CD14-positive monocyte (primary cell): ENCODE measurements at regions of chr18 and their contacts with region 1.

Region 1: DNA sequence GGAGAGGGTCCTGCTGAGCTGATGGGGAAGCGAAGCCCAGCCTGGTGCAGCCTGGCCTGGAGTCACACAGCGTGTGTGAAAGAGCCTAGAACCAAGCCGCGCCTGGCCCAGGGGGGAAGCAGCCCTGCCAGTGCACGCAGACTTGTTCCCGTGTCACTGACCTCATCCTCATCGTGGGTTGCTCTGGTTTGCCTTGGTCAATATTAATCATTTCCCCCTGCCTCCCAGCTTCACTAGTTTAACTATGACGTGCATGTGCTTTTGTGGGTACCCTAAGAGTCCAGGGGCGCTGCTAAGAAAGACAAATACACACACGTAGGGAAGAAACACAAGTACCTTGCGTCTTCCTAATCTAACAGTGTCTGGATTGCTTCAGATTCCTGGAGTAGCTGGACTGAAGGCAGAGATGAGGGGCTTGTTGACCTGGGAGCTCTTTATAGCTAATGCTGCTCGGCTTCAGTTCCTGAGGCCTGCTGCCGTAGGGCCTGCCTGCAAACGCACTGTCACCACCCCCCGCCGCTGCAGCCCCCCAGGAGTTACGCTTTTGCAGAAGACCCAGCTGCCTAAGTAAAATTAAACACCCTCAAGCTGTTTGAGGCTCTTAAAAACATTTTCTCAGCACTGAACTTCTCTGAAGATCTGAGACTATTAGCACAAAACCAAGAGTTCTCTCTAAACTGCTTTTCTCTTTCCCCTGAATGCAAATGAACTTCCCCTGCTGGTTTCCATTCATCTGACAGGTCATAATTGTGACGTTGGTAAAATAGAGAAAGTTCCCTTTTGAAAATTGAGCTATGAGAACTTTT is 159.2 kb downstream of the FAM210A start:
- DNase-seq: peak; percentile 94 to 97 (median 96)
- H3K4me3 ChIP-seq: peak overlapping the region in 2 of 3 experiments; percentile 20 to 47
- H3K4me3 Mint-ChIP-seq: peak overlapping the region; percentile 59 to 78
- H3K27ac ChIP-seq: peak overlapping the region; percentile 99 to 100
- H3K27ac Mint-ChIP-seq: peak overlapping the region; percentile 99 to 100 (median 99)
- H3K4me1 ChIP-seq: peaks cover 72 to 80% of the 10 kb centered on the region in 2 donors
- H3K4me1 Mint-ChIP-seq: peaks cover 75% of the 10 kb centered on the region
- H3K27me3 ChIP-seq: no peaks in the 10 kb centered on the region
- H3K27me3 Mint-ChIP-seq: peaks cover 0 to 1% (median 0%) of the 10 kb centered on the region in 3 donors
- CTCF ChIP-seq: no peak

Region 2: GRCh38 chr18:13375302-13376255 is 191.6 kb before region 1 on chr18:
- intact Hi-C with region 1: loop called in 1 of 2 experiments (anchors 10 kb)
- DNase-seq: peak; percentile 74 to 89 (median 80)
- H3K4me3 ChIP-seq: no peak overlapping the region
- H3K4me3 Mint-ChIP-seq: no peak overlapping the region
- H3K27ac ChIP-seq: no peak overlapping the region
- H3K27ac Mint-ChIP-seq: peak overlapping the region; percentile 50 to 87 (median 72)
- H3K4me1 ChIP-seq: peaks cover 11 to 26% of the 10 kb centered on the region in 2 donors
- H3K4me1 Mint-ChIP-seq: peaks cover 31% of the 10 kb centered on the region
- H3K27me3 ChIP-seq: no peaks in the 10 kb centered on the region
- H3K27me3 Mint-ChIP-seq: peaks cover 2 to 4% (median 3%) of the 10 kb centered on the region in 3 donors
- CTCF ChIP-seq: no peak

Region 3: DNA sequence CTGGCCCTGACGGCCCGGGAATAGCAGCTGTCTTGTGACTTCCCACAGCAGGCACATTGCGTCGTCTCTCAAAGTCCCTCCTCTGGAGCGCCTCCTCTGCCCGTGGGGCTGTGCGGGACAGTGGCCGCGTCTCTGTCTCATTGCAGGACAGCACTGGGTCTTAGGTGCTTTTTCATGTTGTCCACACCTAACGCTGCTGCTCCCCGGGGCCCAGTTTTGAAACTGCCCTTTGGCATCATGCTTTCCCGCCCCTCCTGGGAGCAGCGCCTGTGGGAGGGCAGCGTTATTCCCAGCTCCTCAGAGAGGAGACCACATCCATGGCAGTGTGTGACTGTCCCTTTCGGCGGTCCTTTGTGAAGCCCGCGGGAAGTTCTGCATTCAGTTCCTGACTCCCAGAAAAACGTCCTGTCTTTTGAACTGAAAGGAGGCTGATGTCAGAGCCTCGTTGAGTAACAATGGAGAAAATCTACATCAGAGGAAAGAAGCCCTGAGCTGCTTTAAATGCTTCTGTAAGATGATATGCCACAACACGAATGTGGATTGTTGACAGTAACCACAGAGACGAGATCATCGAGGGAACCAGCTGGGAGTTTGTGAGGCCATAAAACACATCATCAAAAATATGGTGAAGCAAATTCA is 66.8 kb before region 1 on chr18:
- intact Hi-C with region 1: no loop called
- DNase-seq: no peak
- H3K4me3 ChIP-seq: no peak overlapping the region
- H3K4me3 Mint-ChIP-seq: no peak overlapping the region
- H3K27ac ChIP-seq: no peak overlapping the region
- H3K27ac Mint-ChIP-seq: no peak overlapping the region
- H3K4me1 ChIP-seq: no peaks in the 10 kb centered on the region
- H3K4me1 Mint-ChIP-seq: peaks cover 2% of the 10 kb centered on the region
- H3K27me3 ChIP-seq: no peaks in the 10 kb centered on the region
- H3K27me3 Mint-ChIP-seq: peaks cover 0 to 8% (median under 1%) of the 10 kb centered on the region in 3 donors
- CTCF ChIP-seq: no peak

Region 4: GRCh38 chr18:13548966-13549879 is 17.9 kb before region 1 on chr18:
- intact Hi-C with region 1: no loop called
- DNase-seq: peak in 1 of 3 donors; percentile 25
- H3K4me3 ChIP-seq: peak overlapping the region in 1 of 3 experiments; percentile 39
- H3K4me3 Mint-ChIP-seq: peak overlapping the region; percentile 60 to 83
- H3K27ac ChIP-seq: peak overlapping the region; percentile 40 to 57
- H3K27ac Mint-ChIP-seq: peak overlapping the region; percentile 78 to 95 (median 91)
- H3K4me1 ChIP-seq: peaks cover 20% of the 10 kb centered on the region in 2 donors
- H3K4me1 Mint-ChIP-seq: peaks cover 28% of the 10 kb centered on the region
- H3K27me3 ChIP-seq: no peaks in the 10 kb centered on the region
- H3K27me3 Mint-ChIP-seq: peaks cover 2 to 8% (median 3%) of the 10 kb centered on the region in 3 donors
- CTCF ChIP-seq: no peak

Region 5: DNA sequence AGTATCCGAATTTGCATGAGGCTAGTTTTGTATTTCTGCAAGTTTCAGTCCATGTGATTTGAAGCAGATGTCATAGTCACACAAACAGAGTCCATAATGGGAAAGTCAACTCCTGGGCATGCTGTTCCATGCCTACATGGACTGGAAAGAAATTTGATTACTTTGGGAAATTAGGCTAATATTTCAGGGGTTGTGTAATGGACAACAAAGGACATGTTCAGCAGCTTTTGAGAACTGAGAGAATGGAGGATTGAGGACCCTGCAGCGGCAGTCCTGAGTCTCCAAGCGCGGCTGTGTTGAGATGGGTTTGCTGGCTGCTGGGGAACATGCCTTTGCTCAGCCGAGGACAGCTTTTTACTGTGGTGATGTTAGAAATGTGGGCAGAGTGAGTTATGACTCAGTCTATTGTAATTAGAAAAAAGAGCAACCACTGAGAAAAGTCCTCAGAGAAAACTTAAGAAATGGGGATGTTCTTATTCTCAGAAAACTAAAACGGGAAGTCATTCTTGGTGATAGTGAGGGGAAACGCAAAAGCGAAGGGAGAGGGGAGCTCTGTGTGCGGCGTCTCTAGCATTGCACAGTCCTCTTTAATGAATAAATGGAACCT is 10.1 kb after region 1 on chr18:
- intact Hi-C with region 1: loop called in 1 of 2 experiments (anchors 1 kb)
- DNase-seq: peak; percentile 82 to 92 (median 88)
- H3K4me3 ChIP-seq: peak overlapping the region; percentile 20 to 58 (median 24)
- H3K4me3 Mint-ChIP-seq: peak overlapping the region; percentile 53 to 75
- H3K27ac ChIP-seq: peak overlapping the region; percentile 89 to 92
- H3K27ac Mint-ChIP-seq: peak overlapping the region; percentile 95 to 98 (median 98)
- H3K4me1 ChIP-seq: peaks cover 48% of the 10 kb centered on the region in 2 donors
- H3K4me1 Mint-ChIP-seq: peaks cover 46% of the 10 kb centered on the region
- H3K27me3 ChIP-seq: no peaks in the 10 kb centered on the region
- H3K27me3 Mint-ChIP-seq: peaks cover 2% of the 10 kb centered on the region in 3 donors
- CTCF ChIP-seq: no peak

Region 6: DNA sequence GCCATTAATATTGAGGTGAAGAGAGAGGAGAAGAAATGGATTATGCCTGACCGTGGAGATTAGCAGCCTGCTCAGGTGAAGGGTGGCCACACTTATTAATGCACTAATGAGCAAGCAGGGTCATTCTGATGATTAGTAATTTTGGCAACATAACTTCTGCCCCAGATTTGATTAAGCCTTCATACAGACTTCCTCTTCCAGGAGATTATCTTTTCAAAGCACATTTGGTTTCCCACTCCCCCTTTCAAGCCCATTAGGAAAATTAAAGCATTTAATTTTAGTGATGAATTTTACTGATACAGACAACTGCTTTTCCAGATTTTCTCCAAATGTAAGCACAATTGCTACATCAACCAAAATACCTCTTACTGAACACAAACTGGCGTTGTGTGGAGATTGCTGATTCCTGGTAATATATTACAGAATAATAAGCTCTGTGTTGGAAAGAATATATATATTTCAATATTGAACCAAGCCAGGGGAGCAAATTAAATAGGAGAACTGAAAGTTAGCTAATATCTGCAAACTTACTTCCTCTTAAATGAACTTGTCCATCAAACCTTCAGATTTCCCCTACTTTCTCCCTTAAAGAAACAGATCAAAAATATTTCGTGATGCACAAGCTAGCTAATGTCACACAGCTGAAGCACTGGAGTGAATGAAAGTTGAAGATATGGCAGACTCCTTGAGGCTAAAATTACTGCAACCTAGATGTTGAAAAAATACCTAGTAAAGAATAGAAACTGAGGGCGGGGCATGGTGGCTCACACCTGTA is 18.4 kb after region 1 on chr18:
- intact Hi-C with region 1: loop called in 1 of 2 experiments (anchors 2 kb)
- DNase-seq: peak; percentile 61 to 83 (median 80)
- H3K4me3 ChIP-seq: peak overlapping the region in 1 of 3 experiments; percentile 53
- H3K4me3 Mint-ChIP-seq: peak overlapping the region; percentile 12 to 57
- H3K27ac ChIP-seq: peak overlapping the region; percentile 76 to 92
- H3K27ac Mint-ChIP-seq: peak overlapping the region; percentile 91 to 98 (median 94)
- H3K4me1 ChIP-seq: peaks cover 55% of the 10 kb centered on the region in 2 donors
- H3K4me1 Mint-ChIP-seq: peaks cover 59% of the 10 kb centered on the region
- H3K27me3 ChIP-seq: no peaks in the 10 kb centered on the region
- H3K27me3 Mint-ChIP-seq: peaks cover 0 to 7% (median 0%) of the 10 kb centered on the region in 3 donors
- CTCF ChIP-seq: no peak

Region 7: GRCh38 chr18:13611601-13612195 is 44.6 kb after region 1 on chr18:
- intact Hi-C with region 1: loop called in 1 of 2 experiments (anchors 5 kb)
- DNase-seq: peak; percentile 36 to 47 (median 41)
- H3K4me3 ChIP-seq: peak overlapping the region; percentile 10 to 61 (median 24)
- H3K4me3 Mint-ChIP-seq: peak overlapping the region; percentile 74 to 94
- H3K27ac ChIP-seq: peak overlapping the region in 1 of 2 donors; percentile 23
- H3K27ac Mint-ChIP-seq: peak overlapping the region; percentile 56 to 93 (median 89)
- H3K4me1 ChIP-seq: peaks cover 57 to 65% of the 10 kb centered on the region in 2 donors
- H3K4me1 Mint-ChIP-seq: peaks cover 68% of the 10 kb centered on the region
- H3K27me3 ChIP-seq: peaks cover 0 to 21% of the 10 kb centered on the region in 2 donors
- H3K27me3 Mint-ChIP-seq: peaks cover 29 to 37% (median 30%) of the 10 kb centered on the region in 3 donors
- CTCF ChIP-seq: no peak